Activated CD8-positive, alpha-beta T cell treated with anti-CD3 and anti-CD28 coated beads for 36 hours (primary cell): ENCODE measurements at regions of chr2 and their contacts with region 1.

Region 1: GRCh38 chr2:98487806-98488651 is 43.4 kb downstream of the INPP4A start:
- DNase-seq: peak; percentile 78
- ATAC-seq: peak; percentile 52
- H3K4me3 Mint-ChIP-seq: no peak overlapping the region
- H3K27ac Mint-ChIP-seq: peak overlapping the region; percentile 60
- H3K4me1 Mint-ChIP-seq: peaks cover 97% of the 10 kb centered on the region
- H3K27me3 Mint-ChIP-seq: no peaks in the 10 kb centered on the region
- CTCF ChIP-seq: peak; percentile 79

Region 2: GRCh38 chr2:98324181-98324580 is 163.8 kb before region 1 on chr2:
- CTCF ChIA-PET with region 1: no interaction called
- POLR2A ChIA-PET with region 1: no interaction called
- intact Hi-C with region 1: no loop called
- DNase-seq: no peak
- ATAC-seq: no peak
- H3K4me3 Mint-ChIP-seq: no peak overlapping the region
- H3K27ac Mint-ChIP-seq: no peak overlapping the region
- H3K4me1 Mint-ChIP-seq: no peaks in the 10 kb centered on the region
- H3K27me3 Mint-ChIP-seq: peaks cover 10% of the 10 kb centered on the region
- CTCF ChIP-seq: no peak

Region 3: GRCh38 chr2:98444436-98445176 is 43.4 kb before region 1 on chr2 and contains the start of gene INPP4A:
- CTCF ChIA-PET with region 1: interaction called, 11 read pairs
- POLR2A ChIA-PET with region 1: interaction called, 7 read pairs
- intact Hi-C with region 1: loop called (anchors 5 kb)
- DNase-seq: peak; percentile 73
- ATAC-seq: peak; percentile 73
- H3K4me3 Mint-ChIP-seq: peak within 1 kb of the TSS; percentile 81
- H3K27ac Mint-ChIP-seq: peak within 1 kb of the TSS; percentile 90
- H3K4me1 Mint-ChIP-seq: peaks cover 34% of the 10 kb centered on the region
- H3K27me3 Mint-ChIP-seq: no peaks in the 10 kb centered on the region
- CTCF ChIP-seq: no peak
- total RNA-seq, gene INPP4A: 46.7 to 46.9 TPM

Region 4: GRCh38 chr2:98465456-98466226 is 22.4 kb before region 1 on chr2:
- CTCF ChIA-PET with region 1: interaction called, 30 read pairs
- POLR2A ChIA-PET with region 1: interaction called, 23 read pairs
- intact Hi-C with region 1: no loop called
- DNase-seq: peak; percentile 81
- ATAC-seq: peak; percentile 11
- H3K4me3 Mint-ChIP-seq: peak overlapping the region; percentile 69
- H3K27ac Mint-ChIP-seq: peak overlapping the region; percentile 97
- H3K4me1 Mint-ChIP-seq: peaks cover 87% of the 10 kb centered on the region
- H3K27me3 Mint-ChIP-seq: no peaks in the 10 kb centered on the region
- CTCF ChIP-seq: no peak

Region 5: GRCh38 chr2:98473995-98474780 is 13.8 kb before region 1 on chr2:
- CTCF ChIA-PET with region 1: interaction called, 30 read pairs
- POLR2A ChIA-PET with region 1: interaction called, 19 read pairs
- intact Hi-C with region 1: no loop called
- DNase-seq: peak; percentile 46
- ATAC-seq: peak; percentile 41
- H3K4me3 Mint-ChIP-seq: peak overlapping the region; percentile 72
- H3K27ac Mint-ChIP-seq: peak overlapping the region; percentile 96
- H3K4me1 Mint-ChIP-seq: peaks cover 94% of the 10 kb centered on the region
- H3K27me3 Mint-ChIP-seq: no peaks in the 10 kb centered on the region
- CTCF ChIP-seq: no peak

Region 6: GRCh38 chr2:98508709-98509066 is 20.7 kb after region 1 on chr2:
- CTCF ChIA-PET with region 1: interaction called, 44 read pairs
- POLR2A ChIA-PET with region 1: interaction called, 8 read pairs
- intact Hi-C with region 1: no loop called
- DNase-seq: peak; percentile 77
- ATAC-seq: peak; percentile 72
- H3K4me3 Mint-ChIP-seq: peak overlapping the region; percentile 8
- H3K27ac Mint-ChIP-seq: peak overlapping the region; percentile 81
- H3K4me1 Mint-ChIP-seq: peaks cover 91% of the 10 kb centered on the region
- H3K27me3 Mint-ChIP-seq: no peaks in the 10 kb centered on the region
- CTCF ChIP-seq: no peak

Region 7: GRCh38 chr2:98518090-98518489 is 30.1 kb after region 1 on chr2:
- CTCF ChIA-PET with region 1: interaction called, 15 read pairs
- POLR2A ChIA-PET with region 1: no interaction called
- intact Hi-C with region 1: loop called (anchors 5 kb)
- DNase-seq: peak; percentile 71
- ATAC-seq: peak; percentile 76
- H3K4me3 Mint-ChIP-seq: no peak overlapping the region
- H3K27ac Mint-ChIP-seq: no peak overlapping the region
- H3K4me1 Mint-ChIP-seq: peaks cover 58% of the 10 kb centered on the region
- H3K27me3 Mint-ChIP-seq: no peaks in the 10 kb centered on the region
- CTCF ChIP-seq: peak; percentile 77

Region 8: DNA sequence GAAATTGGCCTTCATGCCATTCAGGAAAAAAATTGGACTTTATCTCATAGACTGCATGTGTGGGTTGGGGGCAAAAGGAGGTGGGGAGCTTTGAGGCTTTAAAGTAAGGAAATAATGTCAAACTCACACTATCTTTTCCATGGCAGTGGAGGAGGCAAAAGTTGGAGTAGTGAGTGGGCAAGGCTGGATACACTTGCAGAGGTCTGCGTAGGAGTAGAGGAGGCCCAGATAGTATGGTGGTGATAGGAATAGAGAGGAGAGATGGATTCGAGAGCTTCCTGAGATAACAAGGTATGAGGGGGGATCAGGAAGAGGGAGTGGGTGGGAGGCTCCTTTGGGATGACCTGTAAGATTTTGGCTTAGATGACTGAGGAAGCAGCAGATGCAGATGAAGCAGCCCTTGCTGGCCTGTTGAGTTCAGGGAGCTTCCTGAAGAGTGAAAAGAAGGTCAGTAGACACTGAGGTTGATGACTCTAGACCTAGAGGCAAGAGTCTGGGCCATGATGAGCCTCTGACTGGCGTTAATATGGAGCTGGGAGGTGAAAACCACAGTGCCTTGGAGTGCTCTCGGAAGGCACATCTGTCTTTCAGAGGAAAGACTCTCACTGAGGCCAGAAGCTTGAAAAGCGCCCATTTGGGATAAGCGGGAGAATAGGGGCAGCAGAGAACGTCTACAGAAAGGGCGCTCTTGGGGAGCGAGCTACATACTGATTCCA is 126.2 kb after region 1 on chr2:
- CTCF ChIA-PET with region 1: no interaction called
- POLR2A ChIA-PET with region 1: no interaction called
- intact Hi-C with region 1: no loop called
- DNase-seq: no peak
- ATAC-seq: no peak
- H3K4me3 Mint-ChIP-seq: no peak overlapping the region
- H3K27ac Mint-ChIP-seq: peak overlapping the region; percentile 50
- H3K4me1 Mint-ChIP-seq: peaks cover 59% of the 10 kb centered on the region
- H3K27me3 Mint-ChIP-seq: no peaks in the 10 kb centered on the region
- CTCF ChIP-seq: no peak

Region 9: GRCh38 chr2:98649135-98649991 is 161.3 kb after region 1 on chr2:
- CTCF ChIA-PET with region 1: no interaction called
- POLR2A ChIA-PET with region 1: no interaction called
- intact Hi-C with region 1: no loop called
- DNase-seq: peak; percentile 93
- ATAC-seq: peak; percentile 99
- H3K4me3 Mint-ChIP-seq: no peak overlapping the region
- H3K27ac Mint-ChIP-seq: peak overlapping the region; percentile 88
- H3K4me1 Mint-ChIP-seq: peaks cover 63% of the 10 kb centered on the region
- H3K27me3 Mint-ChIP-seq: no peaks in the 10 kb centered on the region
- CTCF ChIP-seq: peak; percentile 90